ENCODE measurements at regions of chr9 and their contacts with region 1.

Region 1: GRCh38 chr9:73118898-73119554 is 32.6 kb upstream of the ANXA1 start:
- DNase-seq: no peak
- H3K4me3 Mint-ChIP-seq: no peak overlapping the region
- H3K27ac Mint-ChIP-seq: no peak overlapping the region
- H3K4me1 Mint-ChIP-seq: peaks cover 34% of the 10 kb centered on the region
- H3K27me3 Mint-ChIP-seq: no peaks in the 10 kb centered on the region

Region 2: DNA sequence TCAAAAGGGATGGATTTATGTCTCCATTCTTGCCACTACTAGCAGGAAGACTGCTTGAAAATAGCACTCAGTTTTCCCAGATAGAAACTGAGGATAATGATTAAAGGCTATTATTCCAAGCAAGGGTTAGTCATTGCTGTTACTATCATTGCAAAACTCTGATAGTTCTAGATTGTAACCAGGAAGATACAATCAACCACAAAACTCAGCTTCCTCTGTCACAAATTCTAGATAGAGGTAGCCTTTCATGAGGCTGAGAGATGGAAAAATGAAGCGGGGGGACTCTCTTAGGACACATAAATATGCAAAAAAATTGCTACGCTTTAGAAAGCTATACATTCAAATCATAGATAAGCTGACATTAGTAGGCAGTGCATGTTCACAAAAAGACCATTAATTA is 35.7 kb after region 1 on chr9:
- CTCF ChIA-PET with region 1: interaction called, 6 read pairs
- intact Hi-C with region 1: loop called (anchors 1 kb)
- DNase-seq: no peak
- H3K4me3 Mint-ChIP-seq: peak overlapping the region; percentile 62
- H3K27ac Mint-ChIP-seq: peak overlapping the region; percentile 86
- H3K4me1 Mint-ChIP-seq: peaks cover 73% of the 10 kb centered on the region
- H3K27me3 Mint-ChIP-seq: no peaks in the 10 kb centered on the region

Region 3: DNA sequence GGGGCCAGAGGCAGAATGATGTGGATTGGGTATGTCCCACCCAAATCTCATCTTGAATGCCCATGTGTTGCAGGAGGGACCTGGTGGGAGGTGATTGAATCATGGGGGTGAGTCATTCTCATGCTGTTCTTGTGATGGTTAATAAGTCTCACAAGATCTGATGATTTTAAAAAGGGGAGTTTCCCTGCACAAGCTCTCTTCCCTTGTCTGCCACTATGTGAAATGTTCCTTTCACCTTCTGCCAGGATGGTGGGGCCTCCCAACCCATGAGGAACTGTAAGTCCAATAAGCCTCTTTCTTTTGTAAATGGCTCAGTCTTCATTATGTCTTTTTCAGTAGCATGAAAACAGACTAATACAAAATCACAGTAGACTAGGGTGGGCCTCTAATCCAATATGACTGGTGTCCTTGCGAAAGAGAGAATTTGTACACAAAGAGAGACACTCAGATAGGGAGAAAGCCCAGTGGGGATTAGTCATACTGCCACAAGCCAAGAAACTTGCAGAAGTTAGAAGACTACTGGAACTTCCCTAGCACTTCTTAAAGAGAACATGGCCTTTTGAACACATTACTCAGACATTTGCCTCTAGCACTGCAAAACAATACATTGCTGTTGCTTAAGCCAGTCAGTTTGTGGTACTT is 101.1 kb after region 1 on chr9:
- CTCF ChIA-PET with region 1: no interaction called
- intact Hi-C with region 1: loop called (anchors 2 kb)
- DNase-seq: peak; percentile 61
- H3K4me3 Mint-ChIP-seq: no peak overlapping the region
- H3K27ac Mint-ChIP-seq: peak overlapping the region; percentile 91
- H3K4me1 Mint-ChIP-seq: peaks cover 27% of the 10 kb centered on the region
- H3K27me3 Mint-ChIP-seq: peaks cover 44% of the 10 kb centered on the region

Measured in activated naive CD4-positive, alpha-beta T cell treated with anti-CD3 and anti-CD28 coated beads for 36 hours (primary cell).